ENCODE measurements at regions of chr7 and their contacts with region 1.

Region 1: DNA sequence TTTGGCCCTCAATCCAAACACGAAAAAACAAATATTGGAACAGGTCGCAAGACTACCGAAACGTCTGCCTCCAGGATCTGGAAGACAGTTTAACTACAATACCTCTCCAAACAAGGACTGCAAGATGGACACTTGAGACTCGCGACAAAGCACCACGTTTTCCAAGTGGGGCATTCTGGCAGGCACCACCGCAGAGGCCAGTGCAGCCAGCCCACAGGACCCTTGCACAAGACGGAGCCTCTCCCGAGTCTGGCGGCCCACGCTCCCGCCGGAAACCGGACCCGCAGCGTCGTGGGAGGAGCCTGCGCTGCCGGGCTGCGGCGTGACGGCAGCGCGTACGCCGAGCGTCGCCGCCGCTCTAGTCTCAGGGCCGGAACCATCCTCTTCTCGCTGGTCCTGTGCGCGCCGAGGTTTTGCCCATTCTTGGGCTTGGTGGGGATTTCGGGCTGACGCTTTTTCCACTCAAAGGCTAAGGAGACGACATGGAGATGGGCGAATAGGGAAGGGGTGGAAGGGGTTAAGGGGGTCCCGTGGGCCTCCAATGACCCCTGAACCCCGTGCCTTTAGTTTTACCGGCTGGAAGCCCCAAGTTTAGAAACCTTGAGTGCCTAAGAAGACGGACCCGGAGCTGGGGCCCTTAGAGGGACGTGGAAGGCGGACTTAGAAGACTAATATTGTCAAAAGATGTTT is at the start of gene ORC5:
- DNase-seq: peak; percentile 79
- H3K4me3 Mint-ChIP-seq: peak within 1 kb of the TSS; percentile 94
- H3K27ac Mint-ChIP-seq: peak within 1 kb of the TSS; percentile 92
- H3K4me1 Mint-ChIP-seq: peaks cover 43% of the 10 kb centered on the region
- H3K27me3 Mint-ChIP-seq: peaks cover 8% of the 10 kb centered on the region
- total RNA-seq, gene ORC5: 32.5 and 35.8 TPM in 2 replicates

Region 2: DNA sequence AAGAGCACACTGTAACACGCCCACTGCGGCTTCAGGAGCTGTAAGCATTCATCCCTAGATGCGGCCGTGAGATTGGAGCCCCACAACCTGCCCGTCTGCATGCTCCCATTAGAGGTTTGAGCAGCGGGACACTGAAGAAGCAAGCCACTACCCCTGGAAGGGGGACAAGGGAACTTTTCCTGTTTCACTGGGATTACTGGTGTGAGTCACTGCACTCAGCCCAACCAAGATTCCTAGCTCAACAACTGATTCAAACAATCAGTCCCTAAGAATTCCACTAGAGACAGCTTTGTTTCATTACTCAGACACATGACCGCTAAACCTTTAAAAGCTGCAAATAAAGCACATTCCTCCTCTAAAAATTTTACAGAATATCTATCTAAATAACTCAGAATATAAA is 69.9 kb before region 1 on chr7:
- intact Hi-C with region 1: loop called (anchors 1 kb)
- DNase-seq: no peak
- H3K4me3 Mint-ChIP-seq: no peak overlapping the region
- H3K27ac Mint-ChIP-seq: no peak overlapping the region
- H3K4me1 Mint-ChIP-seq: peaks cover 9% of the 10 kb centered on the region
- H3K27me3 Mint-ChIP-seq: no peaks in the 10 kb centered on the region

Region 3: GRCh38 chr7:104196161-104196560 is 11.7 kb before region 1 on chr7:
- intact Hi-C with region 1: loop called (anchors 1 kb)
- DNase-seq: no peak
- H3K4me3 Mint-ChIP-seq: no peak overlapping the region
- H3K27ac Mint-ChIP-seq: no peak overlapping the region
- H3K4me1 Mint-ChIP-seq: peaks cover 7% of the 10 kb centered on the region
- H3K27me3 Mint-ChIP-seq: no peaks in the 10 kb centered on the region

Region 4: GRCh38 chr7:105531792-105532671 is 1324.2 kb after region 1 on chr7 and contains the start of gene RINT1:
- intact Hi-C with region 1: loop called (anchors 10 kb)
- DNase-seq: peak; percentile 85
- H3K4me3 Mint-ChIP-seq: peak within 1 kb of the TSS; percentile 93
- H3K27ac Mint-ChIP-seq: peak within 1 kb of the TSS; percentile 95
- H3K4me1 Mint-ChIP-seq: peaks cover 21% of the 10 kb centered on the region
- H3K27me3 Mint-ChIP-seq: peaks cover 1% of the 10 kb centered on the region
- total RNA-seq, gene RINT1: 21.9 and 32.5 TPM in 2 replicates

Measured in activated T-helper 1 cell treated with anti-CD3 and anti-CD28 coated beads, Interleukin-12 subunit alpha, Interleukin-12 subunit beta, Interleukin-2, Interleukin-4 antibody, amounts not matched to agents 30 ng/mL and 10 ng/mL and 1 ng/mL, durations not matched to agents 14 hours and 24 hours and 36 hours (primary cell).